ENCODE measurements at regions of chr15 and their contacts with region 1.

Region 1: DNA sequence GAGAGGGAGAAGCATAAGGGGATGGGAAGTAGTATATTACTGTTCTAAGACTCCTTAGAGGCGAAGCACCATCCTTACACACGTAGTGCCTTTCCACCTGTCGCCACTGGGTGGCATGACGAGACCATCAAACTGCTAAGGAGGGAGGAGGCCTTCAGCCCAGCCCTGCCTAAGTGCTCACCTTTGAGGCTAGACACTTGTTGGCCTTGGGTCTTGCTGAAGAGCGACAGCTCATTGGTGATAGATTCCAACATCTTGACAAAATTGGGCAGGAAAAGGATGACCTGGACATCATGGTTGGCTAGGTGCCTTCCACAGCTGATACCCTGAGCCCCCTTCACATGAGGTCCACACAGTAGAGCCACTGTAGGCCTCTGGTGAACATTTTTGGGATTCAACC is 19.6 kb downstream of the CLK3 start:
- DNase-seq: peak; percentile 74
- H3K4me3 ChIP-seq: no peak overlapping the region
- H3K27ac ChIP-seq: no peak overlapping the region
- H3K4me1 ChIP-seq: no peaks in the 10 kb centered on the region
- H3K27me3 ChIP-seq: no peaks in the 10 kb centered on the region
- CTCF ChIP-seq: peak; percentile 92
- EP300 ChIP-seq: no peak
- RAD21 ChIP-seq: peak; percentile 94

Region 2: GRCh38 chr15:74545880-74546656 is 89.2 kb before region 1 on chr15:
- CTCF ChIA-PET with region 1: interaction called, 13 read pairs
- POLR2A ChIA-PET with region 1: interaction called, 6 read pairs
- DNase-seq: peak; percentile 94
- H3K4me3 ChIP-seq: peak overlapping the region in 1 of 2 experiments; percentile 9; a peak in 1 of 4 replicates
- H3K27ac ChIP-seq: peak overlapping the region; percentile 35 to 77; a peak in 3 of 4 replicates
- H3K4me1 ChIP-seq: peaks cover 13 to 26% of the 10 kb centered on the region in 2 experiments
- H3K27me3 ChIP-seq: no peaks in the 10 kb centered on the region
- CTCF ChIP-seq: no peak
- EP300 ChIP-seq: peak; percentile 80 to 85; a peak in 3 of 4 replicates
- RAD21 ChIP-seq: peak; percentile 43

Region 3: GRCh38 chr15:74584779-74585178 is 50.4 kb before region 1 on chr15:
- CTCF ChIA-PET with region 1: no interaction called
- POLR2A ChIA-PET with region 1: no interaction called
- DNase-seq: peak; percentile 89
- H3K4me3 ChIP-seq: no peak overlapping the region
- H3K27ac ChIP-seq: peak overlapping the region in 1 of 2 experiments; percentile 87; a peak in 2 of 4 replicates
- H3K4me1 ChIP-seq: peaks cover 4 to 33% of the 10 kb centered on the region in 2 experiments; a peak in 3 of 4 replicates
- H3K27me3 ChIP-seq: no peaks in the 10 kb centered on the region
- CTCF ChIP-seq: no peak
- EP300 ChIP-seq: peak in 1 of 2 experiments; percentile 79; a peak in 2 of 4 replicates
- RAD21 ChIP-seq: no peak

Region 4: DNA sequence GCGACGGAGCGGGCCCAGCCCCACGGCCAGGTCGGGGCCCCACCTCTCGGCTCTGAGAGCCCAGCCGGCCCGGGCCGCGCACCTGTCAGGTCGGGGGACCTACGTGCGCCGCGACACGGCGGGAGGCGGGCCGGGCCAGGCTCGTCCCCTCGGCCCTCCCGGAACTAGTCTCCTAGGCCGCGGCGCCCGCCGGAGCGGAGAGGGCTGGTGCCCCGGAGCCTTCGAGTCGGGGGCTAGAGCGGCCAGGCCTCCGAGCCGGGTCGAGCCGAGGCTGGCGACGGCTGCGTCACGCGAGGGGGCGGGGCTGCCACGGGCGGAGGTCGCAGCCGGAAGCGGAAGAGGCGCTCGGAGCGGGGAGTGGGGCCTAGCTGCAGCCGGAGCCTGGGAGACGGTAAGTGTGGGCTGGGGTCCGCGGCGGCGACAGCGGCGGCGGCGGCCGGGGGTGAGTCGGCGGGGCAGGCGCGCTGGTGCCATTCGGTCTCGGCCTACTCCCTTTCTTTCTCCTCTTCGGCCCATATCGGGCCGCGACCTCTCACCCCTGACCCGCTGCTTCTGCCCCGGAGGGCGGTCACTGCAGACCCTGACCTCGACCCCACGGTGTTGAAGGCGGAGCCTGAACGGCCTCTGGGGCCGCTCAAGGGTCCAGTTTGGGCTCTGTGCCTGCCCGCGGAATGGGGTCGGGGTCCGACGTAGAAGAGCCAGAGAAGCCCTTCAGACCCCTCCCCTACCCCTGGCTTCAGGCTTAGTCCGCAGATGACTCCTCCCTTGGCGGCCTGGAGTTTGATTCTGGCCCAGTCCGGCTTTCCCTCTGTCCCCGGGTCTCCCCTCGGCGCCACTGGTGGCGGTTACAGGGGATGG is 19.5 kb before region 1 on chr15 and contains the start of gene CLK3:
- CTCF ChIA-PET with region 1: interaction called, 245 read pairs
- POLR2A ChIA-PET with region 1: interaction called, 5 read pairs
- DNase-seq: peak; percentile 99
- H3K4me3 ChIP-seq: peak within 1 kb of the TSS; percentile 98 to 99
- H3K27ac ChIP-seq: peak within 1 kb of the TSS; percentile 92 to 95
- H3K4me1 ChIP-seq: peaks cover 0 to 28% of the 10 kb centered on the region in 2 experiments; a peak in 2 of 4 replicates
- H3K27me3 ChIP-seq: no peaks in the 10 kb centered on the region
- CTCF ChIP-seq: no peak
- EP300 ChIP-seq: peak in 1 of 2 experiments; percentile 49; a peak in 1 of 4 replicates
- RAD21 ChIP-seq: no peak
- polyA plus RNA-seq, gene CLK3: 67.7 and 72.4 TPM in 2 replicates

Region 5: DNA sequence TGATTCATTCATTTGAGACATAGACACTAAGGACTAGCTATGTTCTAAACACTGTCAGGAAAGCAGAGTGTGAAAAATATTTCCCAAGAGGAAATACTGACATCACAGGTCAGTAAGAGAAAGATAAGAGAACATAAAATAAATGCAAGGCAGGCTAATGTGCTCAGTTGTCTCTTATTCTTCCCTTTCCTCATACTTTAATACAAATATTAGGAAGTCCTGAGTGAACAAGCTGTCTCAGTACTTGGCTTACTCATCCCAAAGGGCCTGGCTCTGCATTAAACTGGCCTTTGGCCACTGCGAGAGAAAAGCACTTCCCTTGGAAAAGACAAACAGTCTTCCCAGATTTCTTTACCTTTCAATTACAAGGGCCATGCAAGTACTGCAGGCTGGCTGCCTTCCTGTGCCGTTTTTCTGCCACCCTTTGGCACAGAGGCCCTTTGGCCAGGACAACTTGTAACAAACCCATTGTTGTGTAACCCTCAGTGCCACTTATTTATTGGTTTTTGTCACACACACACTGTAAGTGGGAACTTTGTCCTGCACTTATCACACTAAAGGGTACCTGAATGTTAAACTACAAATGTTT is 28.9 kb after region 1 on chr15:
- CTCF ChIA-PET with region 1: interaction called, 10 read pairs
- POLR2A ChIA-PET with region 1: no interaction called
- DNase-seq: no peak
- H3K4me3 ChIP-seq: no peak overlapping the region
- H3K27ac ChIP-seq: peak overlapping the region in 1 of 2 experiments; percentile 10; a peak in 1 of 4 replicates
- H3K4me1 ChIP-seq: peaks cover 0 to 7% of the 10 kb centered on the region in 2 experiments; a peak in 1 of 4 replicates
- H3K27me3 ChIP-seq: no peaks in the 10 kb centered on the region
- CTCF ChIP-seq: no peak
- EP300 ChIP-seq: no peak
- RAD21 ChIP-seq: no peak

Region 6: DNA sequence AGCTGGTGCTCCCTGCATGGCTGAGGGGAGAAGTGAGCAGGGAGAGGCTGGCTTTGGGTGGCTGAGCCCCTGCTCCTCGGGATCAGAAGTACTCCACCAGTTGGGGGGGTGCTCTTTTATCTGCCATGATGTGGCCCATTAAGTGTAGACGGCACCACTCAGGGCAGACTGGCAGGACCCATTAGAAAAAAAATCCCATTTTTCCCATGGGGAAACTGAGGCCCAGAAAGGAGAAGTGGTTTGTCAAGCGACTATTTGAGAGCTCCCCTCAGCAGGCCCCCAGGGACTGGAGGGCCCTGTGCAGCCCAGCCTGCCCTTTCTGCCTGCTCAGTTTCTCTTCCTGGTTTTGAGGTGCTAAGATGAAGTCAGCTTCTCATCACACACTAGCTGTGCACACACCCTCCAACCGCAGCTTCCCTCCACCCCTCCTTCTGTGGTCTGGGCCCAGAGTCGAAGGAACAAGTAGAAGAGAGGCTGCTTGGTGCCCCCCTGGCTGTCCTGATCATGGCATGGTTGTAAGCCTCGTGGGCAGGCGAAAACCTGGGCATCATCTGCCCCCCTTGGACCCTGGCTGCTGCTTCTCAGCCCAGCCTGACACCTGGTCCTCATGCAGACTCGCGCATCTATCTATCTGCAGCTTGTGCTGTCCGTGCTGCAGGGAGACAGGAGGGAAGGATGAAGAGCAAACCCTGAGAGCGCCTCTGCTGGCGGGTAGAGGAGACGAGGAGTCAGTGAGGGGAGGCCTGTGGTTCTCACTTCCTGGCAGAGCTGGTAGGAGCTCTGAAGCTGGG is 152.2 kb after region 1 on chr15:
- CTCF ChIA-PET with region 1: interaction called, 1,109 read pairs
- POLR2A ChIA-PET with region 1: no interaction called
- DNase-seq: peak; percentile 69
- H3K4me3 ChIP-seq: no peak overlapping the region; a peak in 1 of 4 replicates
- H3K27ac ChIP-seq: 0 out of 4 replicates have a peak overlapping the region, but pooled peaks of 1 of the 2 experiments have one; percentile 17
- H3K4me1 ChIP-seq: peaks cover 21 to 70% of the 10 kb centered on the region in 2 experiments
- H3K27me3 ChIP-seq: no peaks in the 10 kb centered on the region
- CTCF ChIP-seq: peak; percentile 55
- EP300 ChIP-seq: no peak
- RAD21 ChIP-seq: 0 out of 2 replicates have a peak, but pooled peaks have one; percentile 13

Region 7: GRCh38 chr15:74873036-74873755 is 238.0 kb after region 1 on chr15 and contains the start of gene SCAMP2:
- CTCF ChIA-PET with region 1: no interaction called
- POLR2A ChIA-PET with region 1: no interaction called
- DNase-seq: peak; percentile 98
- H3K4me3 ChIP-seq: peak within 1 kb of the TSS; percentile 72 to 88
- H3K27ac ChIP-seq: peak within 1 kb of the TSS; percentile 80 to 84; a peak in 3 of 4 replicates
- H3K4me1 ChIP-seq: peaks cover 10 to 20% of the 10 kb centered on the region in 2 experiments; a peak in 2 of 4 replicates
- H3K27me3 ChIP-seq: no peaks in the 10 kb centered on the region
- CTCF ChIP-seq: no peak
- EP300 ChIP-seq: no peak
- RAD21 ChIP-seq: no peak
- polyA plus RNA-seq, gene SCAMP2: 88.1 and 99.5 TPM in 2 replicates

Region 8: DNA sequence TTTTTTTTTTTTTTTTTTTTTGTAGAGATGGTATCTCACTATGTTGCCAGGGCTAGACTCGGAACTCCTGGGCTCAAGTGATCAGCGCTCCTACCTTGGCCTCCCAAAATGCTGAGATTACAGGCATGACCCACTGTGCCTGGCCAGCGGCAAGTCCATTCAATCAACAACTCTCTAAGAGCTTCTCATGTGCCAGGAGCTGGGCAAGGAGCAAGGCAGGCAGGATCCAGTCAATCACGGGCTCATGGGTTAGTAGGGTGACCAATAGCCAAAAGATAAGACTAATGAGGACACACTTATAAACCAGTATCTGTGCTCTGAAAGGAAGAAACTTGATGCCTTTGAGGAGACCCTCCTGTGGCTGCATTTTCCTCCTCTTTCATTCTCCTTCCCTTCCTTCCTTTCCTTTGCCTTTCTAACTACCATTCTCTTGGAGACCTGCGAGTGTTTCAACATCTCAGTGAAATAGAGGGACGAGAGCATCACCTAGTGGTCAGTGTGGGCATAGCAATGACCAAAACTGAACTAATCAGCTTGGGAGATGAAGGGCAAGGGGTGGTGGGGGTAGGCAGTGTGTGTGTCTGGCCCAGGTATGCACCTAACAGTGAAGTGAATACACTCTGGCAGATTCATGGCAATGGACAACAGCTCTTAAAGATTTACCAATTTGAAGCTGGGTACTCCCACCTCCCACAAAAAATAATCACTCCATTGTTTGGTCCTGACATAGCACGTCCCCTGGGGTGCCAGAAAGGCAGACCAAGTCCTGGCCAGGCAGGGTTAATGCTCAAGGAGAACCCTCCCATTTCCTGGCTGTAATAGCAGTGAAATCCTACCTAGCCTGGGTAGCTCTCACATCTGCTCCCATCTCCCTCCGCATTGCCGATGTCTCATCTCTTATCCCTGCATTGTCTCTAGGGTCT is 315.1 kb after region 1 on chr15:
- CTCF ChIA-PET with region 1: interaction called, 25 read pairs
- POLR2A ChIA-PET with region 1: no interaction called
- DNase-seq: peak; percentile 67
- H3K4me3 ChIP-seq: no peak overlapping the region; a peak in 1 of 4 replicates
- H3K27ac ChIP-seq: no peak overlapping the region; a peak in 1 of 4 replicates
- H3K4me1 ChIP-seq: peaks cover 0 to 18% of the 10 kb centered on the region in 2 experiments; a peak in 1 of 4 replicates
- H3K27me3 ChIP-seq: no peaks in the 10 kb centered on the region
- CTCF ChIP-seq: peak; percentile 98
- EP300 ChIP-seq: 0 out of 4 replicates have a peak, but pooled peaks of 1 of the 2 experiments have one; percentile 10
- RAD21 ChIP-seq: peak; percentile 96

Measured in SK-N-SH (cell line).